Colonic mucosa (tissue), 4 donors: ENCODE measurements at regions of chr18 and their contacts with region 1.

Region 1: GRCh38 chr18:39909706-39910105 is 2045.3 kb upstream of the PIK3C3 start:
- DNase-seq: no peak
- H3K4me3 ChIP-seq: no peak overlapping the region
- H3K27ac ChIP-seq: no peak overlapping the region
- H3K4me1 ChIP-seq: no peaks in the 10 kb centered on the region
- H3K27me3 ChIP-seq: no peaks in the 10 kb centered on the region
- CTCF ChIP-seq: no peak

Region 2: DNA sequence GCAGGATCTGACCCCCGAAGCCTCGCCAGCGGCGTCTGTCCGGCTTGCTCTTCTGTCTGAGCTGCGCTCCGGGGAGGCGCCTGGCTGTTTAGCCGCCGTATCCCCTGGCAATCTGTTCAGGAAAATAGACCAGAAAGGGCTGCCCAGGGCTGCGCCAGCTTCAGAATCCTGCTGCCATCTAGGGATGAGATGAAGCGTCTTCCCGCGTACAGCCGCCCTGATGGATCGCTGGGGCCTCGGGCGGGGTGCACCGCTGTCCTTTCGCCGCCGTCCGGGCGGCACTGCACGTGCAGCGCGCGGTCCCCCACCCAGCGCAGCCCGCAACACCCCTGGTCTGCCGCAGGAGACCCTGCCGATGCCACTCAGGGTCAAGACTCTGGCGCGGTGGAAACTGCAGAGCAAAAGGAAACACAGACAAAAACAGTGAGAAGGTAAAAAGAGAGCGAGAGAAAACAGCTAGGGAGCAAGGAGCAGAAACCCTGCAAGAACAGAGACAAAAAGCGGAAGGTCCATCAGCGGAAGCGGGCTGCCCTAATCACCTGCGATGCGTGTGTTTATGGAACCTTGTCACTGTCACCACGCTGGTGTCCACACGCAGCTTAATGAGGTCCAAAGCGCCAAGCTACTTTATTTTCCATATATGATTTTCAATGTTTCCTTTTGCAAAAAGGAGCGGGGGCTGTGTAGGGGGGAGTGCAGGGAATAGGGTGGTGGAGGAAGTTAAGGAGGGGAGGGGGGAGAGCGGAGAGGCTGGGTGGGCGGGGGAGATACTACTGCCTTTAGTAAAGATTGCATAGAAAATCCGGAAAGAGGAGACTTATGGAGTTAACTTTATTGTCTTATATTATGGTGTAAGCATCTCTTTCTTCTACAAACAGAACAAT is 68.0 kb before region 1 on chr18:
- intact Hi-C with region 1: loop called (anchors 10 kb)
- DNase-seq: peak; percentile 36
- H3K4me3 ChIP-seq: peak overlapping the region; percentile 26
- H3K27ac ChIP-seq: no peak overlapping the region
- H3K4me1 ChIP-seq: no peaks in the 10 kb centered on the region
- H3K27me3 ChIP-seq: no peaks in the 10 kb centered on the region
- CTCF ChIP-seq: peak; percentile 16